Caco-2 (cell line): ENCODE measurements at regions of chr5 and their contacts with region 1.

Region 1: GRCh38 chr5:177497292-177498033 is at the start of gene PDLIM7:
- DNase-seq: peak; percentile 97 to 98
- H3K4me3 ChIP-seq: peak within 1 kb of the TSS; percentile 85
- H3K4me3 Mint-ChIP-seq: peak within 1 kb of the TSS; percentile 89
- H3K27ac Mint-ChIP-seq: peak within 1 kb of the TSS; percentile 63
- H3K4me1 ChIP-seq: peaks cover 25% of the 10 kb centered on the region
- H3K4me1 Mint-ChIP-seq: peaks cover 27% of the 10 kb centered on the region
- H3K27me3 ChIP-seq: no peaks in the 10 kb centered on the region
- H3K27me3 Mint-ChIP-seq: peaks cover 11% of the 10 kb centered on the region
- CTCF ChIP-seq: peak in 1 of 2 experiments; percentile 26
- total RNA-seq, gene PDLIM7: 49.1 and 56.8 TPM in 2 replicates

Region 2: DNA sequence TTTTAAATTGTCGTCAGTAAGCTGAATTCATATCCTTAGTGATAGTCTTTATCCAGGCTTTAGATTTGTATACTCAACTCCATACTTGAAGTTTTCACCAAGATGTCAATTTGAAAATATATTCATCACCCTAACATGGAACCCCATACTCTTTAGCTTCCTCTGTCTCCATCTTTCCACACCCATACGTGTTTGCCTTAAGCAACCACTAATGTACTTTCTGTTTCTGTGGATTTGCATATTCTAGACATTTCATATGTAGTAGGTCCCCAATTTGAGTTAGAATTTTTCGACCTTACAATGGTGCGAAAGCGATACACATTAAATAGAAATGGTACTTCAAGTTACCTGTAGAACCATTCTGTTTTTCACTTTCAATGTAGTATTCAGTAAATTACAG is 298.7 kb before region 1 on chr5:
- CTCF ChIA-PET with region 1: no interaction called
- POLR2A ChIA-PET with region 1: no interaction called
- intact Hi-C with region 1: no loop called
- DNase-seq: no peak
- H3K4me3 ChIP-seq: no peak overlapping the region
- H3K4me3 Mint-ChIP-seq: no peak overlapping the region
- H3K27ac Mint-ChIP-seq: no peak overlapping the region
- H3K4me1 ChIP-seq: no peaks in the 10 kb centered on the region
- H3K4me1 Mint-ChIP-seq: no peaks in the 10 kb centered on the region
- H3K27me3 ChIP-seq: no peaks in the 10 kb centered on the region
- H3K27me3 Mint-ChIP-seq: no peaks in the 10 kb centered on the region
- CTCF ChIP-seq: no peak

Region 3: DNA sequence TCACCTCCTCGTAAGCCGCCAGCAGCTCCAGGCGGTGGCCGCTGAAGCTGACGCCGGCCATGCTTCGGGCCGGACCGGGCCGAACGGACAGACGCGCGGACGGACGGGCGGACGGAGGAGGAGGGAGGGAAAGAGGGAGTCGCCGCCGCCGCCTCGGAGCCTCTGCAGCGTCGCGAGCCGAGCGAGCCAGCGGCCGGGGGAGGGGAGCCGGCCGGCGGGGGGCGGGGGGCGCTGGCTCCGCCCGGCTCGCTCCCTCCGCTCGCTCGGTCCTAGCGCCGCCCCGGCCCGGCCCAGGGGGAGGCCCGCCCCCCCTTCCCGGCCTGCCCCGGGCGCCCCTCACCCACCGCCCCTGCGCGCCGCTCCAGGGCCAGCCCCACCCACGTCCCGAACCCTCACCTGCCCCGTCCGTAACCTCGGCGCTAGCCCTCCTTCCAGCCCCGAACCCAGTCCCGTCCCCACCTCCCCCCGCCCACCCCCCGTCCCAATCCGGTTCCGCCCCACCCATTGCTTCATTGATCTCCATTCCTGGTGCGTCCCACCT is 23.9 kb before region 1 on chr5 and contains the start of gene DBN1:
- CTCF ChIA-PET with region 1: interaction called, 6 read pairs
- POLR2A ChIA-PET with region 1: interaction called, 8 read pairs
- intact Hi-C with region 1: loop called (anchors 1 kb)
- DNase-seq: peak in 1 of 2 experiments; percentile 55
- H3K4me3 ChIP-seq: peak within 1 kb of the TSS; percentile 86
- H3K4me3 Mint-ChIP-seq: peak within 1 kb of the TSS; percentile 74
- H3K27ac Mint-ChIP-seq: peak within 1 kb of the TSS; percentile 11
- H3K4me1 ChIP-seq: peaks cover 40% of the 10 kb centered on the region
- H3K4me1 Mint-ChIP-seq: peaks cover 37% of the 10 kb centered on the region
- H3K27me3 ChIP-seq: no peaks in the 10 kb centered on the region
- H3K27me3 Mint-ChIP-seq: no peaks in the 10 kb centered on the region
- CTCF ChIP-seq: no peak
- total RNA-seq, gene DBN1: 139 and 144 TPM in 2 replicates